B cell (primary cell): ENCODE measurements at regions of chr1 and their contacts with region 1.

Region 1: DNA sequence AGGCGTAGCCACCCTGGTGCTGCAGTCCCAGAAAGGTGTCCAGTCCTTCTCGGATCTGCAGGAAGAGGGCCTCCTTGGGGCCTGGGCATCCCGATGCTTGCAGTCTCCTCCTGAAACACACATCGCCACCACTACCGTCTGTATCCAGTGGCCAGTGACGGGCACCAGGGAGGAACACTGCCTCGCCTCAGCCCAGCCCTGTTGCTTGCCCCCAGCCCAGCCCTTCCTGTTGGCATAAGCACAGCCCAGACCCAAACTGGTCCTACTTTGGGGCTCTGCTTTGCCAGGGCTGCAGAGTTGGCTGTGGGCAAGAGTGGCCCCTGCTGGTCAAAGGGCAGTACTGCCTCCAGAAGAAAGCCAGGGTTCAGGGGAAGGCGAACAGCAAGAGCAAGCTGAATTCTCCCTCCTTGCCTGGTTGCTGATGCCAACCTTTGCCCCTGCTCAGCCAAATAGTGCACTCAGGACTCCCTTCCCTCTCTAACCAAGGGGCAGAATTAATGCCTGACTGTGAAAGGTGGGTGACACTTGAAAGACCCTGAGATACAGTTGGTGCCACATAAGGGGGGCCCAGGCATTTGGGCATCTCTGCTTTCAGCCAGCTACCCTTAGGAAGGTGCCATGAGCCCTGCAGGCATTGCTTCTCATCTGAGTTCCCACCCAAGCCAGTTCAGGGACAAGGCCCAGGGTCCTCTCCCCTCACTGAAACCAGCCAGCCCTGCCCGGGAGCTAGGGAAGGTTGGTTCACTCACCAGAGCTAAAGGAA is 11.1 kb upstream of the ARHGEF2 start:
- DNase-seq: peak; percentile 88
- ATAC-seq: peak; percentile 100
- H3K4me3 ChIP-seq: peak overlapping the region in 2 of 5 experiments; percentile 8 to 19
- H3K4me3 Mint-ChIP-seq: no peak overlapping the region
- H3K27ac ChIP-seq: peak overlapping the region; percentile 11 to 32
- H3K27ac Mint-ChIP-seq: peak overlapping the region; percentile 73
- H3K4me1 ChIP-seq: peaks cover 24 to 32% of the 10 kb centered on the region in 2 donors
- H3K4me1 Mint-ChIP-seq: peaks cover 24% of the 10 kb centered on the region
- H3K27me3 ChIP-seq: no peaks in the 10 kb centered on the region
- H3K27me3 Mint-ChIP-seq: no peaks in the 10 kb centered on the region
- CTCF ChIP-seq: peak; percentile 98

Region 2: GRCh38 chr1:155920717-155921116 is 68.7 kb before region 1 on chr1:
- CTCF ChIA-PET with region 1: interaction called, 17 read pairs
- POLR2A ChIA-PET with region 1: no interaction called
- intact Hi-C with region 1: no loop called
- DNase-seq: no peak
- ATAC-seq: no peak
- H3K4me3 ChIP-seq: no peak overlapping the region
- H3K4me3 Mint-ChIP-seq: no peak overlapping the region
- H3K27ac ChIP-seq: no peak overlapping the region
- H3K27ac Mint-ChIP-seq: no peak overlapping the region
- H3K4me1 ChIP-seq: no peaks in the 10 kb centered on the region
- H3K4me1 Mint-ChIP-seq: no peaks in the 10 kb centered on the region
- H3K27me3 ChIP-seq: no peaks in the 10 kb centered on the region
- H3K27me3 Mint-ChIP-seq: no peaks in the 10 kb centered on the region
- CTCF ChIP-seq: no peak

Region 3: DNA sequence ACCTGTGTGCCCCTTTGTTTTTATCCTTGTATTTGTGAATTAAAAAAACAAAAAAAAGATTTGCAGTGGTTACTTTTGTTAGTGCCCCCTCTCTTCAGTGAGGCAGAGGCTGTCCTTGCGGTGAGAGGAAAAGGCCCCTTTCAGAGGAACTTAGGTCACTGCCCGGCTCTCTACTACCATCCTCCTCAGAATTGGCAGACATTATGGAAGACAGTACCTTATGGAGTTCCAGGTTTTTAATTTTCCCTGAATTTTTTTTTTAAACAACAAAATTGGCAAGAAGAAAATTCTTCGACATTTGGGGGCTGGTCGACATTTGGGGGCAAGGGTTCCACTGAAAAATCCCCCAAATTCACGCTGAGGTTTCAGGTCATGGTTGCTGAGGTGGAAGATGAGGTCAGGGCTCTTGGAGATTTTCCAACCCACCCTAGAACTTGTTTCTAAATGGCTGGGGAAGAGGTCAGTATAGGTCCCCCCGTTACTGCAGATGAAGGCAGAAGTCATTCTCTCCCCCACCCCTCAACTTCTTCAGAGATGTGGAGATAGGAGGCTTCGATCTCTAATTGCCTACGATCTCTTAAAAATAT is 42.7 kb before region 1 on chr1:
- CTCF ChIA-PET with region 1: interaction called, 206 read pairs
- POLR2A ChIA-PET with region 1: interaction called, 44 read pairs
- intact Hi-C with region 1: no loop called
- DNase-seq: no peak
- ATAC-seq: peak; percentile 11
- H3K4me3 ChIP-seq: peak overlapping the region in 1 of 5 experiments; percentile 4
- H3K4me3 Mint-ChIP-seq: peak overlapping the region; percentile 9
- H3K27ac ChIP-seq: peak overlapping the region; percentile 76 to 89
- H3K27ac Mint-ChIP-seq: peak overlapping the region; percentile 92
- H3K4me1 ChIP-seq: peaks cover 55 to 60% of the 10 kb centered on the region in 2 donors
- H3K4me1 Mint-ChIP-seq: peaks cover 56% of the 10 kb centered on the region
- H3K27me3 ChIP-seq: no peaks in the 10 kb centered on the region
- H3K27me3 Mint-ChIP-seq: no peaks in the 10 kb centered on the region
- CTCF ChIP-seq: no peak

Region 4: DNA sequence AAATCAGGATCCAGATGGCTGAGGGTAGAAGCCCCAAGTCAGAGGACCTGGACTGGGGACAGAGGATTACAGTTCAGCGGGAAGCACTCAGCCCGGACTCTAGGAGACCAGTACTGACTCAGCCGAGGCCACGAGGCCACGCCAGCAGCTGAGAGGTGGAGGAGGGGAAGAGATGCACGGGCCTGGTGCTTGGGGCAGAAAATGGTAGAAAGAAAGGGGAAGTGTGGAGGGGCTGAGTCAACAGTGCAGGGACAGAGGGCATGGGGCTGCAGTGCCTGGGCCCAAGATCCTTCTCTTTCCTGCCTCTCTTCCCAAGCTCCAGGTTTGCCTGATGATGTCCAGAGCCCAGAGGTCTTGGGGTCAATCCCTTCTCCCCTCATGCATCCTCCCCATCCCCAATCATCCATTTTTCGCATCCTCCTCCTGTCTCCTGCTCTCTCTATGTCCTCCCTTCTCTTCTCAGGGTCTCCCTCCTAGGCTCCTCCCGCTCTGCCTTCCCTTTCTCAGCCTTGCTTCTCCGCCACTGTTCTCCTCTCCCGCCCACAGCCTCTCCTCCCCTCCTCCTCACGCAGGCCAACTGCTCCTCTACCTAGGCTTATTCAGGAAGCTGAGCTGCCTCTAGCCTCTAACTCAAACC is 18.8 kb before region 1 on chr1:
- CTCF ChIA-PET with region 1: interaction called, 98 read pairs
- POLR2A ChIA-PET with region 1: no interaction called
- intact Hi-C with region 1: no loop called
- DNase-seq: peak; percentile 79
- ATAC-seq: peak; percentile 95
- H3K4me3 ChIP-seq: peak overlapping the region in 4 of 5 experiments; percentile 6 to 34 (median 22)
- H3K4me3 Mint-ChIP-seq: peak overlapping the region; percentile 79
- H3K27ac ChIP-seq: peak overlapping the region; percentile 41 to 79
- H3K27ac Mint-ChIP-seq: peak overlapping the region; percentile 91
- H3K4me1 ChIP-seq: peaks cover 87 to 99% of the 10 kb centered on the region in 2 donors
- H3K4me1 Mint-ChIP-seq: peaks cover 95% of the 10 kb centered on the region
- H3K27me3 ChIP-seq: no peaks in the 10 kb centered on the region
- H3K27me3 Mint-ChIP-seq: no peaks in the 10 kb centered on the region
- CTCF ChIP-seq: no peak